Endothelial cell of umbilical vein (primary cell): ENCODE measurements at regions of chr4 and their contacts with region 1.

Region 1: GRCh38 chr4:38759113-38759789 is 23.5 kb downstream of the TLR10 start:
- DNase-seq: peak; percentile 64
- H3K4me3 ChIP-seq: no peak overlapping the region
- H3K27ac ChIP-seq: no peak overlapping the region
- H3K4me1 ChIP-seq: no peaks in the 10 kb centered on the region
- H3K27me3 ChIP-seq: peaks cover 0 to 3% of the 10 kb centered on the region in 2 experiments
- CTCF ChIP-seq: peak; percentile 47 to 64
- POLR2A ChIP-seq: no peak

Region 2: DNA sequence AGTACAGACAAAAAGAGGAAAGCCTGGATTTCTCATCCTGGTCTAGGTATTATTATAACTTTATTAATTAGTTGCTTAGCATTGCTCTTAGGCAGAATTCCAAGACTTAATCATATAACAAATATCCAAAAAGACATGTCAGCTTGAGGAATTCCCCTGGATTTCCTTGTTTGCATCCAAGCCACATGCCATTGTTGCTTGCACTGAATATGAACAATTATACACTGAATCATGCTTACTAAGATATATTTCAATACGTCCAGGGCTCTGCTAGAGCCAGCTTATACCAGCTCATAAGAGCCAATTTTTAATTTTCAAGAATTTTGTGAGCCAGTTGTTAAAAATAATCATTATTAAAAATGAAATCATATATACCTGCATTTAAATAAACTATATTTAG is 29.1 kb after region 1 on chr4:
- CTCF ChIA-PET with region 1: interaction called, 89 read pairs
- POLR2A ChIA-PET with region 1: no interaction called
- dilution Hi-C with region 1: no loop called
- intact Hi-C with region 1: no loop called
- DNase-seq: peak; percentile 57
- H3K4me3 ChIP-seq: no peak overlapping the region
- H3K27ac ChIP-seq: no peak overlapping the region
- H3K4me1 ChIP-seq: no peaks in the 10 kb centered on the region
- H3K27me3 ChIP-seq: no peaks in the 10 kb centered on the region
- CTCF ChIP-seq: no peak
- POLR2A ChIP-seq: no peak

Region 3: DNA sequence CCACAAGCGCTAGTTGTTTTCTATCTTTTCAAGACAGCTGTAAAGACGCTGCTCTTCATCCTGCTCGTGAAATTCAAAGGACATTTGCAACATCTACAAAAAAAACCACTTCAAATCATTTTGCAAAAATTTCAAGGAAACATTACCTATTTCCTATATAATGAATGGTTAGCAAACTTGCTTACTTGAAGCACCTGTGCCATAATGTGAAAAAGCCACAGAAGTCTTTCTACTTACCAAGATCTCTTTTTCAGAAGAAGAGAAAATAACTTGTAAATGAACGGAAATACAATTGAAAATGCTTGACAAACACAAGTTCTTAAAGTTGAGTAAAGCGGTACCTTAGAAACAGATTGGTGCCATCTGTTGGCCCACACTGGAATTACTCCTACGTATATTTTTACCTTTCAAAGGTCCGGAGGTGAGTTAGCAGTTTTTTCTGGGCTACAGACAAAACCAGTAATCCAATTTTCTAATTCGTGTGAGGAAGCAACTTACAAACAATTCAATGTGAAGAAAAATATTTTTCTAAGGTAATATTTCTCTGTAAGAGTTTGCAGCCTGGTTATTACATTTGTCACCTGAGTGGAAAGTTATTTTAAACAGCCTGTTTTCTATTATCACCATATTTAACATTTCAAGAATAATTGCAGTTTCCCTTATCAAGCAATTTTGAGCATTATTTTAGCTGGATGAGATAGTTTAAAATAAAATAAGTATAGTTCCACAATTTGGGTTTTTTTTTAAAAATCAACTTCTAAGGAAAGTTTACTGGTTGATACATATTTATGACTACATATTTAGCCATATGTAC is 97.5 kb after region 1 on chr4 and contains the start of gene TLR6:
- CTCF ChIA-PET with region 1: interaction called, 95 read pairs
- POLR2A ChIA-PET with region 1: no interaction called
- dilution Hi-C with region 1: no loop called
- intact Hi-C with region 1: loop called (anchors 1 kb)
- DNase-seq: peak; percentile 73
- H3K4me3 ChIP-seq: peak within 1 kb of the TSS in 1 of 3 experiments; percentile 34
- H3K27ac ChIP-seq: peak within 1 kb of the TSS; percentile 72
- H3K4me1 ChIP-seq: peaks cover 24% of the 10 kb centered on the region
- H3K27me3 ChIP-seq: peaks cover 0 to 2% of the 10 kb centered on the region in 2 experiments
- CTCF ChIP-seq: peak; percentile 51 to 60
- POLR2A ChIP-seq: no peak
- total RNA-seq, gene TLR6: 1.1 and 1.7 TPM in 2 replicates

Region 4: DNA sequence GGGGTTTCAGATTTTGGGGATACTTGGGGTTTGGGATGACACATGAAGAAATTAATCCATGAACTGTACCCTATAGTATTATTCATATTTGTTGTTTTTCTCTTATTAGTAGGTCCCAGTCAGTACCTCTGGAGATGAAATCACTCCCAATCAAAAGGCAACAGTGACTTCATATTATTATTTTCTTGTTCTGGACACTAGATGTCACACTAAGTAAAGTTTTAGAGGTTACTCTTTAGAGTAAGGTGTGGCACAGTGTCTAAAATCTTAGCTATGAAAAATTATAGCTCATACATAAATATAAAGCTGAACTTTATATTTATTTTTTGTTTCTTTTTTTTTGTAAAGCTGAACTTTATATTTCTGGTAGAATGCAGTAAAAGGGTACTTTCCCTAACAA is 143.4 kb after region 1 on chr4:
- CTCF ChIA-PET with region 1: interaction called, 11 read pairs
- POLR2A ChIA-PET with region 1: no interaction called
- dilution Hi-C with region 1: no loop called
- intact Hi-C with region 1: no loop called
- DNase-seq: peak; percentile 35
- H3K4me3 ChIP-seq: no peak overlapping the region
- H3K27ac ChIP-seq: no peak overlapping the region
- H3K4me1 ChIP-seq: no peaks in the 10 kb centered on the region
- H3K27me3 ChIP-seq: no peaks in the 10 kb centered on the region
- CTCF ChIP-seq: no peak
- POLR2A ChIP-seq: no peak

Region 5: DNA sequence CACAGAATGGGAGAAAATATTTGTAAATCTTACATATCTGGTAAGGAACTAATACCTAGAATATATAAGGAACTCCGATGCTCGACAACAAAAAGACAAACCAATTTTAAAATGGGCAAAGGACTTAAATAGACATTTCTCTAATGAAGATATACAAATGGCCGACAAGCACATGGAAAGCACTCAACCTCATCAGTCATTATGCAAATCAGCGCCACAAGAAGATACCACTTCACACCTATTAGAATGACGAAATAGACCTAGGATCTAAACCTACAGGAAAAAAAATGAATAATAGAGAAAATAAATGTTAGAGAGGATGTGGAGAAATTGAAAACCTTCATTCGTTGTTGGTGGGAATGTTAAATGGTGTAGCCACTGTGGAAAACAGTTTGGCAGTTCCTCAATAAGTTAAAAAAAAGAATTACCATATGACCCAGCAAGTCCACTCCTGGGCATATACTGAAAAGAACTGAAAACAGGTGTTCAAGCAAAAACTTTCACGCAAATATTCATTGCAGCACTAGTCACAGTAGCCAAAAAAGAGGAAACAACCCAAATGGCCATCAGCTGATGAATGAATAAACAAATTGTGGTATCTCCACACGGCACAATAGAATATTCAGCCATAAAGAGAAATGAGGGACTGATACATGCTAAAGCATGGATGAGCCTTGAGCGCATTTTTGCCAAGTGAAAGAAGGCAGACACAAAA is 365.8 kb after region 1 on chr4:
- CTCF ChIA-PET with region 1: no interaction called
- POLR2A ChIA-PET with region 1: no interaction called
- dilution Hi-C with region 1: no loop called
- intact Hi-C with region 1: loop called (anchors 5 kb)
- DNase-seq: no peak
- H3K4me3 ChIP-seq: no peak overlapping the region
- H3K27ac ChIP-seq: no peak overlapping the region
- H3K4me1 ChIP-seq: no peaks in the 10 kb centered on the region
- H3K27me3 ChIP-seq: no peaks in the 10 kb centered on the region
- CTCF ChIP-seq: no peak
- POLR2A ChIP-seq: no peak

Region 6: DNA sequence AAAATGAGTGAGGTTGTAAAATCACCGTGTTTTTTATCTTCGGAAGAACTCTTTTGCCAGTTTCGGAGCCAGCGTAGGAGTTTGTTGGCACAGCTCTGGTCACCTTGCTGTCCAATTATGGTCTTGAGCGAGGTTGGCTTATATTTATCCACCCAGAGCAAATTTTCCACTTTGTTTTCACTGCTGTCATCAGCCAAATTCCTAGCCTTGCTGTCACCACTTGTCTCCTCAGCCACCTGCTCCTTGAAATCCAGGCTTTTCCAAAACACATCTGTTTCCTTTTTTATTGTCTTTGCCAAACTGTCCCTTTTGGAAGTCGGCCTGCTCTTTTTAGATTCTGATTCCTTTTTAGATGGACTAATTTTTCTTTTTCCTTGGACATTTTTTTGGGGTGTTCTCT is 549.4 kb after region 1 on chr4:
- CTCF ChIA-PET with region 1: no interaction called
- POLR2A ChIA-PET with region 1: no interaction called
- dilution Hi-C with region 1: no loop called
- intact Hi-C with region 1: no loop called
- DNase-seq: peak; percentile 72
- H3K4me3 ChIP-seq: no peak overlapping the region
- H3K27ac ChIP-seq: peak overlapping the region; percentile 21
- H3K4me1 ChIP-seq: peaks cover 4% of the 10 kb centered on the region
- H3K27me3 ChIP-seq: no peaks in the 10 kb centered on the region
- CTCF ChIP-seq: no peak
- POLR2A ChIP-seq: no peak